Left ventricle myocardium inferior (tissue), 1 donor: ENCODE measurements at regions of chr20 and their contacts with region 1.

Region 1: GRCh38 chr20:56909918-56910714 is 281.0 kb downstream of the TFAP2C start:
- DNase-seq: no peak
- H3K4me3 ChIP-seq: no peak overlapping the region
- H3K27ac ChIP-seq: no peak overlapping the region
- H3K4me1 ChIP-seq: no peaks in the 10 kb centered on the region
- H3K27me3 ChIP-seq: peaks cover 57% of the 10 kb centered on the region
- CTCF ChIP-seq: no peak

Region 2: DNA sequence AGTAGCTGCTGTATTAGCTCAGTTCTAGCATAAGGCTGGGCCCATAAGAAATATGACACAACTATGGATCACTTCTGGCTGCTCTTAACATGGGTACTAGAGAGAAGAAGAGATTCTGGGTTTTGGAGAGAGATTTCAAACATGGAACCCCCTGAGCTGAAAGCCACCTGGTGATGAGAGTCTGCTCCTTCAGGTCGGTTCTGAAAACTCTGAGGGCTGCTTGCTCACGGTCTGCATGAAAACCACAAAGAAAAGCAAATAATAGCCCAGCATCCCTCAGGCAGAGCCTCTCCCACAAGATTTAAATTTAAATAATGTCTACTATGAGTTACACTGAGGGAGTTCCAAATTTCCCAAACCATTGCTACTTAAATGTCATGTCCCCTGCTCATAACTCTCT is 54.8 kb after region 1 on chr20:
- intact Hi-C with region 1: loop called (anchors 10 kb)
- DNase-seq: no peak
- H3K4me3 ChIP-seq: no peak overlapping the region
- H3K27ac ChIP-seq: no peak overlapping the region
- H3K4me1 ChIP-seq: no peaks in the 10 kb centered on the region
- H3K27me3 ChIP-seq: peaks cover 69% of the 10 kb centered on the region
- CTCF ChIP-seq: no peak